ENCODE measurements at regions of chr2 and their contacts with region 1.

Region 1: GRCh38 chr2:3651691-3652648 is 6.0 kb upstream of the ALLC start:
- DNase-seq: no peak
- ATAC-seq: no peak
- H3K4me3 ChIP-seq: no peak overlapping the region
- H3K27ac ChIP-seq: no peak overlapping the region
- H3K4me1 ChIP-seq: peaks cover 0 to 5% of the 10 kb centered on the region in 2 experiments; a peak in 2 of 4 replicates
- H3K27me3 ChIP-seq: no peaks in the 10 kb centered on the region
- CTCF ChIP-seq: no peak
- POLR2A ChIP-seq: no peak
- RAD21 ChIP-seq: no peak

Region 2: DNA sequence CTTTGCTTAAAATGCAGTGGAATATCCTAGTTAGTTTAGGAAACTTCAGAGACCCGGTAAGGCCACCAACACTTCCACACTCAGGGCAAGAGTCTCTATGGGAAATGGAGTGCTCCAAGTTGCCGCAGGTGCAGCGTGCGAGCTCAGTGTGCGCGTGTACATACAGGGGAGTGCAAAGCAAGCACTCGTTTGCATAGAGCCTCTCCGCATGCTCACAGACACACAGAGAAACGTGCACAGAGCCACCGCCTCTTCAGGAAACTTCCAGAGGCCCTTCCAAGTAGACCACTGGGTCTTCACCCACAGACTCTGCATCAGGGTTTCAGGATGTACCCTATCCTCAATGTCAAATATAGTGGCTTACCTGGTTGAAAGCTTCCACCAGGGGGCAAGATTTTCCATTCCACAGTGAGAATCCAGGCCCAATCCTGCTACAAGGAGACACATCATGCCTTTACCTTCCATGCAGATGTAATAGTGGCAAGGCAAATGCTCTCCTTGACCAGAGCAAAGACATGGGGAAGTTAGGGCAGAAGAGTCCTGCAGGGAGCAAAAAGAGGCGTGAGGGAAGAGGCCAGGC is 807.9 kb before region 1 on chr2:
- CTCF ChIA-PET with region 1: no interaction called
- POLR2A ChIA-PET with region 1: no interaction called
- RAD21 ChIA-PET with region 1: no interaction called
- intact Hi-C with region 1: loop called (anchors 5 kb)
- DNase-seq: peak; percentile 7
- ATAC-seq: peak; percentile 69
- H3K4me3 ChIP-seq: no peak overlapping the region
- H3K27ac ChIP-seq: no peak overlapping the region
- H3K4me1 ChIP-seq: peaks cover 11 to 12% of the 10 kb centered on the region in 2 experiments; a peak in 3 of 4 replicates
- H3K27me3 ChIP-seq: peaks cover 3% of the 10 kb centered on the region; the same call in 1 of the 2 replicates
- CTCF ChIP-seq: peak; percentile 29 to 57 (median 54); a peak in 4 of 6 replicates
- POLR2A ChIP-seq: no peak
- RAD21 ChIP-seq: peak; percentile 52

Region 3: GRCh38 chr2:3198119-3198518 is 453.9 kb before region 1 on chr2:
- CTCF ChIA-PET with region 1: no interaction called
- POLR2A ChIA-PET with region 1: no interaction called
- RAD21 ChIA-PET with region 1: no interaction called
- intact Hi-C with region 1: loop called (anchors 5 kb)
- DNase-seq: no peak
- ATAC-seq: peak; percentile 80
- H3K4me3 ChIP-seq: no peak overlapping the region
- H3K27ac ChIP-seq: no peak overlapping the region
- H3K4me1 ChIP-seq: no peaks in the 10 kb centered on the region
- H3K27me3 ChIP-seq: no peaks in the 10 kb centered on the region
- CTCF ChIP-seq: peak in 2 of 3 experiments; percentile 33 to 34; a peak in 2 of 6 replicates
- POLR2A ChIP-seq: no peak
- RAD21 ChIP-seq: peak; percentile 27; the same call in 1 of the 2 replicates

Region 4: DNA sequence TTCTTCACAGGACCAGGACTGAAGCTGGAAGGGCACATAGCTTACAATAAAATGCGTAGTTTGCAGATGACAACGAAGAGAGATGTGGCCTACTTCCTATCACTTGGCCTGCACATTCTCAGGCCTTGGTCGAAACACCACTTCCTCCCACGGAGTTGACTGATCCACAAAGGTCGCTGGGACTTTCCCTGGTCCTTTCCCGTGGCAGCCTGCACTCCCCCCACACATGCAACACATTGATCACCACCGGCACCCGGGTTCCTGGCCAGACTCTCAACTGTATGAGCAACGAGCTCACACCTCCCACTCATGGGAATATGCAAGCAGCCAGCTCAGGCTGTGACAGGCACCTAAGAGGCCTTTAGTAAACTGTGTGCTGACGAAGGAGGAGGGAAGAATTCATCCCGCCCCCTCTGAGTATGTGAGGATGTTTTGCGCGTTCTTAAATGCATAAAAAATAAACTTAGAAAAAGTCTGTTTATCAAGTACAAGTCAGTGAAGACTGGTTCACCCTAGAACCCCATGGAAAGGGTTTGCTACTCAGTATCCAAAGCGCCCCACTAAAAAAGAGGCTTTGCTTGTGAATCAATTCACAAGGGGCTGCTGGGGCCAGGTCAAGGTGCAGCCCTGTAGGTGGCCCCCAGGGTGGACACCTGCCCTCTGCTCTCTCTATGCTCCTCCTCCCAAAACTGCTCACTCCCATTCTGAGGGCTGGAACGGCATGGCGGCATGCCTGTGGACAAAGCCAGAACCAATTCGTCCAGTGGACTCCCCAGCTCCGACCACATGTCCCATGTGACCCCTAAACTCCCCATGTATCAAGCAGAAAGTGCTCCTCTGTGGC is 428.7 kb before region 1 on chr2:
- CTCF ChIA-PET with region 1: no interaction called
- POLR2A ChIA-PET with region 1: no interaction called
- RAD21 ChIA-PET with region 1: no interaction called
- intact Hi-C with region 1: no loop called
- DNase-seq: no peak
- ATAC-seq: no peak
- H3K4me3 ChIP-seq: no peak overlapping the region
- H3K27ac ChIP-seq: no peak overlapping the region
- H3K4me1 ChIP-seq: no peaks in the 10 kb centered on the region
- H3K27me3 ChIP-seq: no peaks in the 10 kb centered on the region
- CTCF ChIP-seq: no peak
- POLR2A ChIP-seq: no peak
- RAD21 ChIP-seq: no peak

Region 5: GRCh38 chr2:3423492-3424175 is 228.3 kb before region 1 on chr2:
- CTCF ChIA-PET with region 1: no interaction called
- POLR2A ChIA-PET with region 1: no interaction called
- RAD21 ChIA-PET with region 1: no interaction called
- intact Hi-C with region 1: loop called (anchors 1 kb)
- DNase-seq: peak; percentile 27
- ATAC-seq: peak; percentile 96
- H3K4me3 ChIP-seq: no peak overlapping the region
- H3K27ac ChIP-seq: no peak overlapping the region
- H3K4me1 ChIP-seq: no peaks in the 10 kb centered on the region
- H3K27me3 ChIP-seq: no peaks in the 10 kb centered on the region
- CTCF ChIP-seq: peak; percentile 67 to 99 (median 98); a peak in 5 of 6 replicates
- POLR2A ChIP-seq: no peak
- RAD21 ChIP-seq: peak; percentile 61; the same call in 1 of the 2 replicates

Region 6: GRCh38 chr2:3536682-3537632 is 115.0 kb before region 1 on chr2:
- CTCF ChIA-PET with region 1: no interaction called
- POLR2A ChIA-PET with region 1: no interaction called
- RAD21 ChIA-PET with region 1: no interaction called
- intact Hi-C with region 1: loop called (anchors 10 kb)
- DNase-seq: peak; percentile 26
- ATAC-seq: peak; percentile 85
- H3K4me3 ChIP-seq: peak overlapping the region; percentile 64 to 65
- H3K27ac ChIP-seq: peak overlapping the region; percentile 75
- H3K4me1 ChIP-seq: peaks cover 8 to 30% of the 10 kb centered on the region in 2 experiments
- H3K27me3 ChIP-seq: no peaks in the 10 kb centered on the region
- CTCF ChIP-seq: peak; percentile 20 to 78 (median 72); a peak in 4 of 6 replicates
- POLR2A ChIP-seq: no peak
- RAD21 ChIP-seq: no peak

Region 7: DNA sequence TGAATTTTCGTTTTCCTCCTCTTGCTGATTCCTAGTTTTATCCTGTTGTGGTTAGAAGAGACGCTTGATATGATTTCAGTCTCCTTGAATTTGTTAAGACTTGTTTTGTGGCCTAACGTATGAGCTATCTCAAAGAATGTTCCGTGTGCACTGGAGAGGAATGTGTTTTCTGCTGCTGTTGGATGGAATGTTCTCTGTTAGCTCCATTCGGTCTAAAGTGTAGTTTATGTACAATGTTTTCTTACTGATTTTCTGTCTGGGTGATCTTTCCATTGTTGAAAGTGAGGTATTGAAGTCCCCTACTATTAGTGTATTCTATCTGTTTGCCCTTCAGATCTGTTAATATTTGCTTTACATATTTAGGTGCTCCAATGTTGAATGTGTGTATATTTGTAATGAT is 31.1 kb before region 1 on chr2:
- CTCF ChIA-PET with region 1: no interaction called
- POLR2A ChIA-PET with region 1: no interaction called
- RAD21 ChIA-PET with region 1: no interaction called
- intact Hi-C with region 1: no loop called
- DNase-seq: no peak
- ATAC-seq: no peak
- H3K4me3 ChIP-seq: no peak overlapping the region
- H3K27ac ChIP-seq: no peak overlapping the region
- H3K4me1 ChIP-seq: no peaks in the 10 kb centered on the region
- H3K27me3 ChIP-seq: no peaks in the 10 kb centered on the region
- CTCF ChIP-seq: no peak
- POLR2A ChIP-seq: no peak
- RAD21 ChIP-seq: no peak

Region 8: DNA sequence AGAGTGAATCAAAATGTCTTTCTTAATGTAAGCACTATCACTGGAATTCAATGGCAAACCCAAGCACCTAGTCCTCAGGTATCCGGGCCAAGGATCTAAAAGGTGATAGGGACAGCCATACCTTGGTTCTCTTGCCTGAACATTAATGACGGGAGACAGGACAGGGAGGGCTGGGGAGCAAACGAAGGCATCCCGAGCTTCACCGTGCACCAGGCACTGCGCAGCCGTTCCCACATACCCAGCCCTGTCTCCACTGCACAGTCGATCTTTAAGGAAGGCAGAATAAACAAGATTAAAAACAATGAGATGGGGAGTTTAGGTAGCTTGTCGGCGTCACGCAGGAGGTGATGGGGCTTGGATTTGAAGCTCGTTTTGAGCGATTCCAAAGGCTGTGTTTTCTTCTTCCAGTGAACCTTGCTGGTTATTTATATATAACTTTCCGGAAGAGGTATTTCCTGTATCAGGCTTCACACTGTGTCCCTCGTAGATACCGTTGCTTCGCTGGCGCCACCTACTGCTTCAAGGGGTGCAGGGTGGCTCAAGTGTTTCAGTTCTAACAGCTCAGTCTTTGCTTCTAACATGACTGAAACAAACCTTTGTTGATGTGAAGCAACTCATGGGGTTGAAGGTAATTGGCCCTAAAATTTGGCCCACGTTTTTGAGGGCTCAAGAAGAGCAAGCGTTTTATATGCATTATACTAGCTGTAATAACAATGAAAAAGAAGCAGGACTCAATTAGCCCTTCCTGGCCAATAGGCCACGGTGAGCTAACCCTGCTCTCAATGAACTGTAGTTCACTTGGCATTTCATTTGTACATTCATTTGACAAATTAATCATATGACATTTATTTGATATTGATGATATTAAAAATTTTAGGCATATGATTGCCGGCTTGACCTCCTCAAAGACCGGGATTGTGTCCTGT is 128.8 kb after region 1 on chr2:
- CTCF ChIA-PET with region 1: no interaction called
- POLR2A ChIA-PET with region 1: no interaction called
- RAD21 ChIA-PET with region 1: no interaction called
- intact Hi-C with region 1: no loop called
- DNase-seq: peak; percentile 46
- ATAC-seq: peak; percentile 97
- H3K4me3 ChIP-seq: no peak overlapping the region
- H3K27ac ChIP-seq: no peak overlapping the region
- H3K4me1 ChIP-seq: peaks cover 0 to 7% of the 10 kb centered on the region in 2 experiments; a peak in 1 of 4 replicates
- H3K27me3 ChIP-seq: peaks cover 13% of the 10 kb centered on the region; the same call in 1 of the 2 replicates
- CTCF ChIP-seq: peak; percentile 69 to 91 (median 88); a peak in 5 of 6 replicates
- POLR2A ChIP-seq: no peak
- RAD21 ChIP-seq: peak; percentile 64

Measured in HCT116 (cell line).